Prostate gland (tissue), 2 donors: ENCODE measurements at regions of chrX and their contacts with region 1.

Region 1: DNA sequence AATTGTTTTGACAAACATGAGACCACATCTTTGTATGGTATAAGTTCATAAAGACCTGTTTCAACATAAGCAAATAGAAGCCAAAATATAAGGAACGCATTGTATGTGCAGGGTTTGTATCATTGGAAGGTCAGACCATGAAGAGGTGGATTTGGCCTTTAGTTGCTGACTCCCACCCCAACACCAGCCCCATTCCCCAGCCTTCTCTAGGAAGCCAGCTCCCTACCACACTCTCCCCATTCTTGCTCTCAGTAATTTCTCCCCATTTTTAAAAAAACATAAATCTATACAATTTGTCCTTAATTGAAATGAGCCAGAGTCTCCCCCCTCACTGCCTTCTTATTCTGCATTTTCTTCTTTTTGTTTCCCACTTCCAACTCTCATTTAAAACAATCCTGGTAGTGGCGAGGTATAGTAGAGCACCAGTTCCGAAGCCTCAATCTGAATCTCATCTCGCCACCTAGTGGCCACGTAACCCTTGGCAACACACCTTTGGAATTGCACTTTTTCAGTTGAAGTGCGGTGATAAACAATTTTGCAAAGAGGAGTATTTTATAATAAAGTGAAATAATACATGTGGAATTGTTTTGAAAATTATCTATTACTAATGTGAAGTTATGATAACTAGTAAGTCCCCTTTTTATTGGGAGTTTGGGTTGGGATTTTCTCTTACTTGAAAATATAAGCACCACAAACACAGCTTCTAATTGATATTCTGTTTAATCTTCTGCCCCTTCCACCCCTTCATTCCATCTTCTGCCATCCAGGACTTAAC is 126.6 kb downstream of the ASB9 start:
- DNase-seq: peak; percentile 21
- H3K4me3 ChIP-seq: no peak overlapping the region
- H3K27ac ChIP-seq: no peak overlapping the region
- H3K4me1 ChIP-seq: no peaks in the 10 kb centered on the region
- H3K27me3 ChIP-seq: no peaks in the 10 kb centered on the region
- CTCF ChIP-seq: peak; percentile 35 to 60 (median 48)
- POLR2A ChIP-seq: no peak

Region 2: DNA sequence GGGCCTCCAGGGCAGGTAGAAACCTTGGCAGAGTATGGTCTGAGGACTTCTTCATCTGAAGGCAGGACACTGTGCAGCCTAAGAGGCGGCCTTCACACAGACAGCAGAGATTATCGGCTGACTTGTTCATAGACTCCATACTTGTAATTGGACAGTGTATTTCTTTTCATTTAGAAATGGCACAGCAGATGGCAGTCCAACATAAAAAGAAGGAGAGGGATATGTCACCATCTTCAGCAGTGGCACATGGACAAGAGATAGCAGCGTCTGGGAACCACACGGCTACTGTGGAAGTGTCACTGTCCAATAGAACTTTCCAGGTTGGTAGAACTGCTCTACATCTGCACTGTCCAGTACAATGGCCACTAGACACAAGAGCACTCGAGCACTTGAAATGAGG is 1091.8 kb before region 1 on chrX:
- intact Hi-C with region 1: loop called (anchors 10 kb)
- DNase-seq: no peak
- H3K4me3 ChIP-seq: no peak overlapping the region
- H3K27ac ChIP-seq: no peak overlapping the region
- H3K4me1 ChIP-seq: no peaks in the 10 kb centered on the region
- H3K27me3 ChIP-seq: no peaks in the 10 kb centered on the region
- CTCF ChIP-seq: no peak
- POLR2A ChIP-seq: no peak

Region 3: DNA sequence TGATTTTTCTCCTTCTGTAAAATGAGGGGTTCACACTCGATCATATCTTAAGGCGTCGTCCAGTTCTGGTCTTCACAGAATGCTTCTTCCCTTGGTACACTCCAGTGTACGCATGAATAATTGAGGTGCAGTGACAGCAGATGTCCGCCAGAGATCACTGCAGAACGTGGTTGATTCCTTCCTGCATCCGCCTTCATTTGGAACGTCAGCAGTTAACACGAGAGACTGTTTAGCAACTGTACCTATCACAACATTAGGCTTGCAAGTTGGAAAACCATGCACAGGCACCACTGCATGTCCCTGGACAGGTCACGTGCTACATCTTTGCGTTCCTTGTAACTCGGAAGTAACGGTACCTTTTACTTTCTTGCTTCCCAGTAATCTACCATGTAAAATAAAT is 1047.5 kb before region 1 on chrX:
- intact Hi-C with region 1: loop called (anchors 10 kb)
- DNase-seq: no peak
- H3K4me3 ChIP-seq: no peak overlapping the region
- H3K27ac ChIP-seq: no peak overlapping the region
- H3K4me1 ChIP-seq: no peaks in the 10 kb centered on the region
- H3K27me3 ChIP-seq: no peaks in the 10 kb centered on the region
- CTCF ChIP-seq: peak in 3 of 4 experiments; percentile 34 to 55 (median 54)
- POLR2A ChIP-seq: no peak

Region 4: DNA sequence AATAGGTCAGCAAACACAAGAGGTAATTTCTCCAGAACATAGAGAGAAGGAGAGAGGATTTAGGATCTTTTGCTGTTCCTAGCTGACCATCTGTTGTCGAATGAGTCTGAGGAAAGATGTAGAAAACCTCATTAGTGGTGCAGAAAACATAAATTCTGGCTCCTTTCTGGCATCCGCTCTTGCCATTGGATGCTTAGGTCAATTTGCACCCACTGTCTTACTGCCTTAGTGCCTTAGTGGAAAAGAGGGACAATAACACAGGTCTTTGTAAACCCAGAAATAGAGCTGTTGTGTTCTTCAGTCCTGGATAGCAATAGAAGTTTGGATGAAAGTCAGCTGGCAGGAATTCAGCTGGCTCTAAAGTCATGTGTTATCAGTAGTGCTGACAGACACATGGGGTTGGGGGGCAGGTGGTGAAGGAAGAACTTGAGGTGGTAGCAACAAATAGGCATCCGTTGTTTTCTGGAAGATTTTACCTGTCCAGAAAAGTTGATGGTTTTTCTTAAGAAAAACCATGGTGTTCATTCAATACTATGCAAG is 535.7 kb before region 1 on chrX:
- intact Hi-C with region 1: no loop called
- DNase-seq: no peak
- H3K4me3 ChIP-seq: no peak overlapping the region
- H3K27ac ChIP-seq: no peak overlapping the region
- H3K4me1 ChIP-seq: no peaks in the 10 kb centered on the region
- H3K27me3 ChIP-seq: no peaks in the 10 kb centered on the region
- CTCF ChIP-seq: no peak
- POLR2A ChIP-seq: no peak

Region 5: GRCh38 chrX:15177316-15177715 is 34.1 kb after region 1 on chrX:
- intact Hi-C with region 1: no loop called
- DNase-seq: no peak
- H3K4me3 ChIP-seq: no peak overlapping the region
- H3K27ac ChIP-seq: no peak overlapping the region
- H3K4me1 ChIP-seq: no peaks in the 10 kb centered on the region
- H3K27me3 ChIP-seq: no peaks in the 10 kb centered on the region
- CTCF ChIP-seq: no peak
- POLR2A ChIP-seq: no peak